GM10248 (cell line): ENCODE measurements at regions of chr15 and their contacts with region 1.

Region 1: GRCh38 chr15:77821188-77821958 is 188.7 kb upstream of the LINGO1 start:
- DNase-seq: peak; percentile 68
- CTCF ChIP-seq: peak; percentile 85

Region 2: DNA sequence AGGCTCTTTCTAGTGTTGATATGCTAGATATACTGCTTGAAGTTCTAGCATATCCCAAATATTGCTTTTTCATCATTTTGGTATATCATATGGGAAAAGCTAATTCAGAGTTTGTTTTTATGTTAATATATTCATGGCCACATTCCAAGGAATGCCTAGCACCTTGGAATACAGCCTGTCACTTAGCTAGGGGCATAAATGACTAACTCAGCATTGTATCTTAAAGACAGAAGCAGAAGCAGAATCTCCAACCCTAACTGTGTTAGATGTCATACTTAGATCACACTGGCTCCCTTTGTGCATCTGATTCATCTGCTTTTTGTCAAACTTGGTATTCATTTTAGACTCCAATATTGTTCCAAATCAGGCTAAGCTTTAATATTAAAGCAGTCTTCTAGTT is 619.7 kb before region 1 on chr15:
- CTCF ChIA-PET with region 1: no interaction called
- POLR2A ChIA-PET with region 1: no interaction called
- DNase-seq: no peak
- CTCF ChIP-seq: no peak

Region 3: GRCh38 chr15:77831986-77832385 is 10.6 kb after region 1 on chr15:
- CTCF ChIA-PET with region 1: interaction called, 10 read pairs
- POLR2A ChIA-PET with region 1: no interaction called
- DNase-seq: no peak
- CTCF ChIP-seq: no peak